ENCODE measurements at regions of chr7 and their contacts with region 1.

Region 1: DNA sequence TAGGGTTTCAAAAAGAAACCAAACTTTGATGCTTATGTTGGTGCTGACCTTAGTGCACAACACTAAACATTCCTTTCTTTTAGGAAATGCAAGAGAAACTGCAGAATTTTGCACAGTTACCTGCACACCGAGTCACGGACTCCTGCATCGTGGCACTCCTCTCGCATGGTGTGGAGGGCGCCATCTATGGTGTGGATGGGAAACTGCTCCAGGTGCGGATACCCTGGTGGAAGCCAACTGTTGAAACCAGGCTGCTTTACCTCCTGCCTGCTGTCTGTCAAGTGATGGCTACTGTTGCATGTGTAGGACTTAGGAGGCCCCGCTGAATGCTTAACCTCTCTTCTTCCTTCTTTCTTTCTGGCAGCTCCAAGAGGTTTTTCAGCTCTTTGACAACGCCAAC is 11.7 kb downstream of the CASP2 start:
- DNase-seq: no peak
- ATAC-seq: peak; percentile 75
- H3K4me3 ChIP-seq: no peak overlapping the region
- H3K27ac ChIP-seq: no peak overlapping the region
- H3K4me1 ChIP-seq: 0 out of 2 replicates have a peak, but pooled peaks cover 3% of the 10 kb centered on the region
- H3K27me3 ChIP-seq: no peaks in the 10 kb centered on the region
- CTCF ChIP-seq: peak; percentile 44 to 69 (median 61)
- EP300 ChIP-seq: no peak
- POLR2A ChIP-seq: 0 out of 2 replicates have a peak, but pooled peaks have one; percentile 33
- RAD21 ChIP-seq: peak; percentile 36; the same call in 1 of the 2 replicates

Region 2: DNA sequence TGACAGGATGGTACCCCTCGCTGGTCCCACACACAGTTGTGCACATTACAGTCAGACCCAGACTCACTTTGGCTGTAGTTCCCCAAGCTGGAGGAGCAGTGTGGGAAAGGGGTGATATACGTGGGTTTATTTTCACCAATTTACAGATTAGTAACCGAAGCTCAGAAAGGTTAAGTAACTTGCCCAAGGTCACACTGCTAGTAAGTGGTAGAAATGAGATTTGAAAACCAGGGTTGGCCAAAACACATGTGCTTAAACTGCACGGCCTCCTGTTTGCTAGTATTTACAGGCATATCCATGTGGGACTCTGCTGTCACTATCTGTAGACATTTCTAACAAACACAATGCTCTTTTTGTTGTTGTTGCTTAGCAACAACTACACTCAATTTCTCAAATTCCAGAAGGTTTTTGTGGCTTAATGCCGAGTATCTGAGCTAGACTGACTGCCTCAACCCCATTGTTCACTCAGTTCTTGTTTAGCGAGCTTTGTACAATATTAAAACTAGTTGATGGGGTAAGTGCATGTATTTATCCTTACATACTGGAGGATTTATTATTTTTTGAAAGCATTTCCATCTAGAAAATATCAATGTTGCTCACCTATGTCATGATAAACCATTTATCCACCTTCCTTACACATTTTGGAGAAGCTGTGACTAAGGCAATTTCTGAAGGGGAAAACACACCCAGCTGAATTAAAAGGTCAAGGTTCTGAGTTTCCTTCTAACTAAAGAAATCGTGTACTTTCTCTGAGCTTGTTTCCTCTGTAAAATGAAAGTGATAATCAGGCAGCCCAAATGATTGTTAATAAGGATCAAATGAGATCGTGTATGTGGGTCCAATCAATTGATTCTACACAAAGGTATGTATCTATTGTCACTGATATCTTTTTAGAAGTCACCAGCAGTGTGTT is 20.4 kb before region 1 on chr7:
- CTCF ChIA-PET with region 1: interaction called, 12 read pairs
- POLR2A ChIA-PET with region 1: no interaction called
- RAD21 ChIA-PET with region 1: no interaction called
- SMC1A ChIA-PET with region 1: interaction called, 6 read pairs
- in situ Hi-C with region 1: no loop called
- intact Hi-C with region 1: no loop called
- DNase-seq: no peak
- ATAC-seq: peak; percentile 57
- H3K4me3 ChIP-seq: no peak overlapping the region
- H3K27ac ChIP-seq: no peak overlapping the region
- H3K4me1 ChIP-seq: peaks cover 7% of the 10 kb centered on the region
- H3K27me3 ChIP-seq: no peaks in the 10 kb centered on the region
- CTCF ChIP-seq: no peak
- EP300 ChIP-seq: no peak
- POLR2A ChIP-seq: no peak
- RAD21 ChIP-seq: no peak